Dorsolateral prefrontal cortex (tissue), 120 donors: ENCODE measurements at regions of chr14 and their contacts with region 1.

Region 1: GRCh38 chr14:105589161-105590062 is 63.0 kb downstream of the TMEM121 start:
- DNase-seq: peak in 3 of 10 donors; percentile 28 to 36 (median 35)
- H3K4me3 ChIP-seq: no peak overlapping the region
- H3K27ac ChIP-seq: no peak overlapping the region
- H3K27me3 ChIP-seq: no peaks in the 10 kb centered on the region
- CTCF ChIP-seq: no peak

Region 2: DNA sequence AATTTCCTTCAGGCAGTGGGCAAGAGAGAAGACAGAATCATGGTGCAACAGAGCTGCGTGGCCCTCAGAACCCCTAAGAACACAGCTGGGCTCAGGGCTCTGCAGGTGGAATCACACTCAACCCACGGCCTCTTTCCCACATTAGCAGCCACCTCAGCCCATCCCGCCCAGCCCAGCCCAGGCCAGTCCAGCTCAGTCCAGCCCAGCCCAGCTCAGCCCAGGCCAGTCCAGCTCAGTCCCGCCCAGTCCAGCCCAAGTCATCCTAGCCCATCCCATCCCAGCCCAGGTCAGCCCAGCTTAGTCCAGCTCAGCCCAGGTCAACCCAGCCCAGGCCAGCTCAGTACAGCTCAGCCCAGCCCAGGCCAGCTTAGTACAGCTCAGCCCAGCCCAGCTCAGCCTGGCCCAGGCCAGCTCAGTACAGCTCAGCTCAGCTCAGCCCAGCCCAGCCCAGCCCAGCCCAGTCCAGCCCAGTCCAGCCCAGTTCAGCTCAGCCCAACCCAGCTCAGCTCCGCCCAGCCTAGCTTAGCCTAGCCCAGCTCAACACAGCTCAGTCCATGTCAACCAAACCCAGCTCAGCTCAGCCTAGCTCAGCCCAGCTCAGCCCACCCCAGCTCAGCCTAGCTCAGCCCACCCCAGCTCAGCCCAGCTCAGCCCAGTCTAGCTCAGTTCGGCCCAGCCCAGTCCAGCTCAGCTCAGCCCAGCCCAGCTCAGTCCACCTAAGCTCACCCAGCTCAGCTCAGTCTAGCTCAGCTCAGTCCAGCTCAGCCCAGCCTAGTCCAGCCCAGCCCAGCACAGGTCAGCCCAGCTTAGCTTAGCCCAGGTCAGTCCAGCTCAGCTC is 120.1 kb after region 1 on chr14:
- intact Hi-C with region 1: loop called in 1 of 2 experiments (anchors 5 kb)
- DNase-seq: no peak
- H3K4me3 ChIP-seq: no peak overlapping the region
- H3K27ac ChIP-seq: no peak overlapping the region
- H3K27me3 ChIP-seq: peaks cover 0 to 4% (median 0%) of the 10 kb centered on the region in 45 donors
- CTCF ChIP-seq: no peak

Region 3: GRCh38 chr14:105748194-105748578 is 158.8 kb after region 1 on chr14:
- intact Hi-C with region 1: no loop called
- DNase-seq: peak in 3 of 10 donors; percentile 32 to 88 (median 58)
- H3K4me3 ChIP-seq: no peak overlapping the region
- H3K27ac ChIP-seq: no peak overlapping the region
- H3K27me3 ChIP-seq: peaks cover 0 to 11% (median 0%) of the 10 kb centered on the region in 45 donors
- CTCF ChIP-seq: no peak

Region 4: GRCh38 chr14:105838591-105839424 is 249.4 kb after region 1 on chr14:
- intact Hi-C with region 1: no loop called
- DNase-seq: peak in 2 of 10 donors; percentile 4 to 20
- H3K4me3 ChIP-seq: no peak overlapping the region
- H3K27ac ChIP-seq: no peak overlapping the region
- H3K27me3 ChIP-seq: peaks cover 0 to 72% (median 22%) of the 10 kb centered on the region in 45 donors
- CTCF ChIP-seq: no peak